ENCODE measurements at regions of chr15 and their contacts with region 1.

Region 1: GRCh38 chr15:90071208-90071807 is 31.0 kb downstream of the IDH2 start:
- DNase-seq: peak; percentile 86

Region 2: DNA sequence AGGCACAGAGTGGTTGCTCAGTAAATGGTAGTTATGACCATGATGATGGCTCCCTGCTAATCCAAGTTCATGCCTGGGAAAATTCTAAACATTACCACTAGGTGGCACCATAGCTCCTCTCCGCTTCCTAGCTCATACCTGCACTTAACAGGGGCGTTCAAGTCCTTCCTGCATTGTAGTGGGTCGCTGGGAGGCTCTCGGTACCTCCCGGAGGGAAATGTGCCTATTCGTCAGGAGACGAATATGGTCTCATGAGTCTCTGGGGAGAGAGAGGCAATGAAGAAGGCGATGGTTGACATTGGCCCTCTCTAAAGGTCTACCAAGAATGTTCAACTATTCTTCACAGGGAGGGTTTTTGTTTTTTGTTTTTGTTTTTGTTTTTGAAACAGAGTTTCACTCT is 331.2 kb before region 1 on chr15:
- intact Hi-C with region 1: loop called (anchors 5 kb)
- DNase-seq: no peak

Region 3: GRCh38 chr15:89912674-89913396 is 158.5 kb before region 1 on chr15 and contains the start of gene ARPIN:
- intact Hi-C with region 1: loop called (anchors 5 kb)
- DNase-seq: no peak
- total RNA-seq, gene ARPIN: 14.4 TPM